Right lobe of liver (tissue), 6 donors: ENCODE measurements at regions of chr12 and their contacts with region 1.

Region 1: GRCh38 chr12:7859552-7859951 is 13.2 kb downstream of the SLC2A14 start:
- DNase-seq: no peak
- ATAC-seq: no peak
- H3K4me3 ChIP-seq: no peak overlapping the region
- H3K27ac ChIP-seq: no peak overlapping the region
- H3K4me1 ChIP-seq: no peaks in the 10 kb centered on the region
- H3K27me3 ChIP-seq: no peaks in the 10 kb centered on the region
- CTCF ChIP-seq: no peak
- POLR2A ChIP-seq: no peak

Region 2: GRCh38 chr12:7995266-7995963 is 135.9 kb after region 1 on chr12:
- intact Hi-C with region 1: loop called (anchors 5 kb)
- DNase-seq: peak; percentile 76 to 80 (median 77)
- ATAC-seq: peak; percentile 99 to 100 (median 100)
- H3K4me3 ChIP-seq: no peak overlapping the region
- H3K27ac ChIP-seq: no peak overlapping the region
- H3K4me1 ChIP-seq: no peaks in the 10 kb centered on the region
- H3K27me3 ChIP-seq: no peaks in the 10 kb centered on the region
- CTCF ChIP-seq: peak; percentile 81 to 91 (median 84)
- POLR2A ChIP-seq: no peak